ENCODE measurements at regions of chr14 and their contacts with region 1.

Region 1: GRCh38 chr14:21263656-21264411 is 5.4 kb downstream of the HNRNPC start:
- DNase-seq: no peak
- H3K4me3 Mint-ChIP-seq: peak overlapping the region; percentile 100
- H3K27ac Mint-ChIP-seq: peak overlapping the region; percentile 100
- H3K4me1 Mint-ChIP-seq: peaks cover 67% of the 10 kb centered on the region
- H3K27me3 Mint-ChIP-seq: no peaks in the 10 kb centered on the region

Region 2: GRCh38 chr14:21203470-21204166 is 60.2 kb before region 1 on chr14:
- CTCF ChIA-PET with region 1: no interaction called
- POLR2A ChIA-PET with region 1: no interaction called
- intact Hi-C with region 1: no loop called
- DNase-seq: no peak
- H3K4me3 Mint-ChIP-seq: no peak overlapping the region
- H3K27ac Mint-ChIP-seq: peak overlapping the region; percentile 47
- H3K4me1 Mint-ChIP-seq: peaks cover 20% of the 10 kb centered on the region
- H3K27me3 Mint-ChIP-seq: no peaks in the 10 kb centered on the region

Region 3: GRCh38 chr14:21278632-21279031 is 14.8 kb after region 1 on chr14:
- CTCF ChIA-PET with region 1: no interaction called
- POLR2A ChIA-PET with region 1: no interaction called
- intact Hi-C with region 1: no loop called
- DNase-seq: no peak
- H3K4me3 Mint-ChIP-seq: no peak overlapping the region
- H3K27ac Mint-ChIP-seq: no peak overlapping the region
- H3K4me1 Mint-ChIP-seq: no peaks in the 10 kb centered on the region
- H3K27me3 Mint-ChIP-seq: no peaks in the 10 kb centered on the region

Region 4: GRCh38 chr14:21414137-21414631 is 150.3 kb after region 1 on chr14:
- CTCF ChIA-PET with region 1: no interaction called
- POLR2A ChIA-PET with region 1: no interaction called
- intact Hi-C with region 1: loop called (anchors 1 kb)
- DNase-seq: no peak
- H3K4me3 Mint-ChIP-seq: no peak overlapping the region
- H3K27ac Mint-ChIP-seq: peak overlapping the region; percentile 89
- H3K4me1 Mint-ChIP-seq: peaks cover 30% of the 10 kb centered on the region
- H3K27me3 Mint-ChIP-seq: no peaks in the 10 kb centered on the region

Measured in activated CD4-positive, alpha-beta memory T cell treated with anti-CD3 and anti-CD28 coated beads for 36 hours (primary cell).